CD8-positive, alpha-beta memory T cell (primary cell): ENCODE measurements at regions of chr11 and their contacts with region 1.

Region 1: GRCh38 chr11:128630367-128631230 is 43.2 kb upstream of the ETS1 start:
- DNase-seq: peak; percentile 82 to 92 (median 84)
- H3K4me3 ChIP-seq: peak overlapping the region; percentile 21
- H3K4me3 Mint-ChIP-seq: peak overlapping the region; percentile 1 to 81 (median 63)
- H3K27ac ChIP-seq: no peak overlapping the region
- H3K27ac Mint-ChIP-seq: peak overlapping the region; percentile 93 to 98 (median 95)
- H3K4me1 ChIP-seq: peaks cover 66% of the 10 kb centered on the region
- H3K4me1 Mint-ChIP-seq: peaks cover 66 to 68% (median 67%) of the 10 kb centered on the region in 3 donors
- H3K27me3 ChIP-seq: no peaks in the 10 kb centered on the region
- H3K27me3 Mint-ChIP-seq: no peaks in the 10 kb centered on the region

Region 2: DNA sequence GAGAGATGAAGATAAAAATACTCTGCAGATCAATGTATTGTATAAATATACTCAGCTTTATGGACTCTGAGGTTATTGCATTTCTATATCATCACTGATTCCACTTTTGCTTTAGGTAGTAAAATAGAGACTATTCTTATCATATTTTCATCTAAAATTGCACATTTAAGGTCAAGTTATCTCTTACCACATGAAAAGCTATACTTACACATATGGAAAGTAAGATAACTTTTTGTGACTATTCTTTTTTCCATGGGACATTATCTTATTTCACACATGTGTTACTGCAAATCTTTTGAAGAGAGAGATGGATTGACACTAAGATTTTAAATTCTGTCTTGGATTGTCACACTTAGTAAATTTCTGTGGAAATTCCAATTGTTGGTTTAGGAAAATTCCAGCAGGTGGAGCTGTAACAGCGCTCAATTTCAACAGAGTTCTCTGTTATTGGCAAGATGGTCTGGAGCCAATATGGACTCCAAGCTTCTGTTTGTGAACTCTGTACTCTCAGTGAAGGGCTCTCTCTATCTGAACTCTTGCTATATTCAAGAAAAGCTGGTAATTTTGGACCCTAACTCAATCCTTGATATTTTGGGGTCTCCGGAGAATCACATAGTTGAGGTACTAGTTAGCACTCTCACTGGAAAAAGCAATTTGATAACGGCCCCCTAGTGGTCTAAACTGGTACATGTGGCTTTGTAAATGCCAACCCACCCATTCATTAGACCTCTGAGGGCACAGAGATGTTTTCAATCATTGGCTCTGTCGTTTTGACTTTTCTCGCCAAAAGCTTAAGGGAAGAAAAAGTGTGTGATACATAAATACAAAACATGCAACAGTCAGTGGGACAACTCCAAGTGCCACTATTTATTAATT is 472.9 kb before region 1 on chr11:
- CTCF ChIA-PET with region 1: interaction called, 31 read pairs
- POLR2A ChIA-PET with region 1: no interaction called
- DNase-seq: peak; percentile 25 to 73 (median 64)
- H3K4me3 ChIP-seq: peak overlapping the region; percentile 54
- H3K4me3 Mint-ChIP-seq: peak overlapping the region; percentile 44 to 92 (median 86)
- H3K27ac ChIP-seq: no peak overlapping the region
- H3K27ac Mint-ChIP-seq: peak overlapping the region in 6 of 8 donors; percentile 47 to 86 (median 74)
- H3K4me1 ChIP-seq: no peaks in the 10 kb centered on the region
- H3K4me1 Mint-ChIP-seq: peaks cover 6 to 10% (median 8%) of the 10 kb centered on the region in 3 donors
- H3K27me3 ChIP-seq: no peaks in the 10 kb centered on the region
- H3K27me3 Mint-ChIP-seq: peaks cover 0 to 1% of the 10 kb centered on the region in 2 donors

Region 3: DNA sequence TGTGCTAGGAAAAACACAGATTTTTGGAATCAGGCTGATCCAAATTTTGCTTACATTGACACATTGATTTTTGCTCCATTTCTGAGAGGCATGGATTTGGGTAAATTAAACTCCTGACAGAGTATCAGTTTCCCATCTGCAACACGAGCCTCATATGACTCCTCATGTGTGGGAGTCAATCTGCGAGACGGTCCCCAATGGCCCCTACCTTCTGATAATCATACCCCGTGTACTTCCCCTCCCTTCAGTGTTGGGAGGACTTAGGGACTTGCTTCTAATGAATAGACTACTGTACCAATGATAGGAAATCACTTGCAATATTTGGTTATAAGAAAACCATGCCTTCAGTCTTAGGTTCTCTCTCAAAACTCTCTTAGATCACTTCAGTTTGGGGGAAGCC is 346.0 kb before region 1 on chr11:
- CTCF ChIA-PET with region 1: interaction called, 94 read pairs
- POLR2A ChIA-PET with region 1: interaction called, 24 read pairs
- DNase-seq: no peak
- H3K4me3 ChIP-seq: peak overlapping the region; percentile 13
- H3K4me3 Mint-ChIP-seq: peak overlapping the region in 6 of 7 donors; percentile 1 to 75 (median 62)
- H3K27ac ChIP-seq: no peak overlapping the region
- H3K27ac Mint-ChIP-seq: peak overlapping the region; percentile 66 to 94 (median 90)
- H3K4me1 ChIP-seq: peaks cover 46% of the 10 kb centered on the region
- H3K4me1 Mint-ChIP-seq: peaks cover 52 to 56% (median 56%) of the 10 kb centered on the region in 3 donors
- H3K27me3 ChIP-seq: no peaks in the 10 kb centered on the region
- H3K27me3 Mint-ChIP-seq: peaks cover 4 to 5% of the 10 kb centered on the region in 2 donors

Region 4: DNA sequence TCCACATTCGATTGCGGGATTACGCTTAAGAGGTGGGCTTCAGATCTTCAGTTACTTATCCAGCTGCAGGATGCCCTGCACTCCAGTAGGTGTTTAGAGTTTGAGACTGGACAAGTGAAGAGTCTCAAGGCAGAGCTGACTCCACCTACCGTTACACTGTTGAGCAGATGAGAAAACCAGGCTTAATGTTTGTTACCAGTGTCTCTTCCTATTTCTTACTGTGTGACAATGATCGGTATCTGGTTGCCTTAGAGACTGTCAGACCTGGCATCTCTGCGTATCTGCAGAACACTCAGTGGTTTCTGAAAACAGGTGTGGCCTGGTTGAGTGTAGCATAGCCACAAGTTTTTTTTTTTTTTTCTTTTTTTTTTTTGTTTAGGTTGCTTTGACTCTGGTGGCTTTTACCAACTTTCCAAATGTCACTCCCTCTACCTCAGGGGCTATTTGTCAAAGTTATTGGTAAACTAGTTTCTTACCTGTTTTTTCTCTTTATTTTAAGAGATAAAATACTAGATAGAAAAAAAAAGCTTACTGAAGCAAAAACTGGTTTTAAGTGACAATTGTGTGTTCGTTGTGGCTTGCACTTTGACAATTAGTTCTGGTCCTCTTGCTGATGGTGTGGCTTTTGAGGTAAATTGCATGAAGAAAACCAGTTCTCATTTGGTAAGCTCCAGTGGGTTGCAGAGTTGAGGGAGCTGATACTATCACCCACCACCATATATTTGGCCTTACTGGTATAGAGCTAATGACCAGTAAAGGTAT is 328.0 kb before region 1 on chr11:
- CTCF ChIA-PET with region 1: interaction called, 12 read pairs
- POLR2A ChIA-PET with region 1: no interaction called
- DNase-seq: peak; percentile 41 to 92 (median 90)
- H3K4me3 ChIP-seq: peak overlapping the region; percentile 76
- H3K4me3 Mint-ChIP-seq: peak overlapping the region; percentile 88 to 96 (median 92)
- H3K27ac ChIP-seq: peak overlapping the region; percentile 92
- H3K27ac Mint-ChIP-seq: peak overlapping the region; percentile 94 to 100 (median 98)
- H3K4me1 ChIP-seq: peaks cover 97% of the 10 kb centered on the region
- H3K4me1 Mint-ChIP-seq: peaks cover 82 to 98% (median 96%) of the 10 kb centered on the region in 3 donors
- H3K27me3 ChIP-seq: no peaks in the 10 kb centered on the region
- H3K27me3 Mint-ChIP-seq: no peaks in the 10 kb centered on the region

Region 5: DNA sequence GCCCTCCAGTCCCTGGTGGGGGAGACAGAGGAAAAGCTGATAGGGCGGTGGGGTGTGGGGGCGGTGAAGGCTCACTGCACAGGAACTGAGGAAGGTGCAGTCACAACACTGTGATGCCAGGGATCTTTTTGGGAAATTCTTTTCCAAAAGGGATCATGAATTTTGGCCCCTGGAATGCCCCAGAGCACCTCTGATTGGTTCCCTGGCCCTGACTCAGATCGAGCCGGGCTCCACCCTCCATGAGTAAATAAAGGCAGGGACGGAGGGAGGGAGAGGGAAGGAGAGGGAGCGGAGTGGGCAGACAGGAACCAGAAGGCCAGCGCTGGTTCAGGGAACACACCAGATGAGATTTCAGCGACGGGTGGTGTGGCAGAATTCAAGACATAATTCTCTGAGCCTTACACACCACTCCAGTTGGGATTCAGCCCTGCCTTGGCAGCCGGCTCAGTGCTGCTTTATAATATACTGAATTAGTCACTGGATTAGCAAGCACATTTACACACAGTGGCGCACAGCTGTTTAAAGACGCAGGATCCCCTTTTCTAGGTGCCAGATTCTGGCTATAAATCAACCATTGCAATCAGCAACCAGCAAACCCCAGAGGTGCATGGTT is 123.5 kb before region 1 on chr11:
- CTCF ChIA-PET with region 1: interaction called, 57 read pairs
- POLR2A ChIA-PET with region 1: interaction called, 10 read pairs
- DNase-seq: no peak
- H3K4me3 ChIP-seq: peak overlapping the region; percentile 97
- H3K4me3 Mint-ChIP-seq: peak overlapping the region; percentile 81 to 99 (median 98)
- H3K27ac ChIP-seq: peak overlapping the region; percentile 48
- H3K27ac Mint-ChIP-seq: peak overlapping the region; percentile 93 to 99 (median 98)
- H3K4me1 ChIP-seq: peaks cover 99% of the 10 kb centered on the region
- H3K4me1 Mint-ChIP-seq: peaks cover 99 to 100% (median 100%) of the 10 kb centered on the region in 3 donors
- H3K27me3 ChIP-seq: no peaks in the 10 kb centered on the region
- H3K27me3 Mint-ChIP-seq: no peaks in the 10 kb centered on the region

Region 6: GRCh38 chr11:128522055-128522942 is 108.3 kb before region 1 on chr11:
- CTCF ChIA-PET with region 1: interaction called, 82 read pairs
- POLR2A ChIA-PET with region 1: interaction called, 40 read pairs
- DNase-seq: peak; percentile 78 to 90 (median 86)
- H3K4me3 ChIP-seq: peak overlapping the region; percentile 97
- H3K4me3 Mint-ChIP-seq: peak overlapping the region; percentile 95 to 100 (median 98)
- H3K27ac ChIP-seq: peak overlapping the region; percentile 92
- H3K27ac Mint-ChIP-seq: peak overlapping the region; percentile 91 to 99 (median 98)
- H3K4me1 ChIP-seq: peaks cover 40% of the 10 kb centered on the region
- H3K4me1 Mint-ChIP-seq: peaks cover 45 to 50% (median 49%) of the 10 kb centered on the region in 3 donors
- H3K27me3 ChIP-seq: no peaks in the 10 kb centered on the region
- H3K27me3 Mint-ChIP-seq: peaks cover 0 to 2% of the 10 kb centered on the region in 2 donors

Region 7: GRCh38 chr11:128582496-128583366 is 47.9 kb before region 1 on chr11:
- CTCF ChIA-PET with region 1: no interaction called
- POLR2A ChIA-PET with region 1: no interaction called
- DNase-seq: no peak
- H3K4me3 ChIP-seq: no peak overlapping the region
- H3K4me3 Mint-ChIP-seq: no peak overlapping the region
- H3K27ac ChIP-seq: no peak overlapping the region
- H3K27ac Mint-ChIP-seq: peak overlapping the region in 1 of 8 donors; percentile 42
- H3K4me1 ChIP-seq: peaks cover 13% of the 10 kb centered on the region
- H3K4me1 Mint-ChIP-seq: peaks cover 12 to 32% (median 16%) of the 10 kb centered on the region in 3 donors
- H3K27me3 ChIP-seq: no peaks in the 10 kb centered on the region
- H3K27me3 Mint-ChIP-seq: no peaks in the 10 kb centered on the region

Region 8: GRCh38 chr11:128757235-128757711 is 126.7 kb after region 1 on chr11:
- CTCF ChIA-PET with region 1: interaction called, 44 read pairs
- POLR2A ChIA-PET with region 1: no interaction called
- DNase-seq: peak; percentile 44 to 83 (median 67)
- H3K4me3 ChIP-seq: no peak overlapping the region
- H3K4me3 Mint-ChIP-seq: peak overlapping the region in 6 of 7 donors; percentile 36 to 65 (median 47)
- H3K27ac ChIP-seq: no peak overlapping the region
- H3K27ac Mint-ChIP-seq: peak overlapping the region; percentile 76 to 99 (median 90)
- H3K4me1 ChIP-seq: peaks cover 66% of the 10 kb centered on the region
- H3K4me1 Mint-ChIP-seq: peaks cover 79 to 93% (median 86%) of the 10 kb centered on the region in 3 donors
- H3K27me3 ChIP-seq: no peaks in the 10 kb centered on the region
- H3K27me3 Mint-ChIP-seq: peaks cover 0 to 2% of the 10 kb centered on the region in 2 donors

Region 9: GRCh38 chr11:128981254-128981653 is 350.7 kb after region 1 on chr11:
- CTCF ChIA-PET with region 1: no interaction called
- POLR2A ChIA-PET with region 1: no interaction called
- DNase-seq: no peak
- H3K4me3 ChIP-seq: no peak overlapping the region
- H3K4me3 Mint-ChIP-seq: no peak overlapping the region
- H3K27ac ChIP-seq: no peak overlapping the region
- H3K27ac Mint-ChIP-seq: no peak overlapping the region
- H3K4me1 ChIP-seq: no peaks in the 10 kb centered on the region
- H3K4me1 Mint-ChIP-seq: peaks cover 0 to 5% (median 3%) of the 10 kb centered on the region in 3 donors
- H3K27me3 ChIP-seq: no peaks in the 10 kb centered on the region
- H3K27me3 Mint-ChIP-seq: peaks cover 0 to 13% of the 10 kb centered on the region in 2 donors